Activated naive CD4-positive, alpha-beta T cell treated with anti-CD3 and anti-CD28 coated beads for 36 hours (primary cell): ENCODE measurements at regions of chr16 and their contacts with region 1.

Region 1: GRCh38 chr16:75519881-75520280 is 16.0 kb downstream of the CHST5 start:
- DNase-seq: no peak
- H3K4me3 Mint-ChIP-seq: no peak overlapping the region
- H3K27ac Mint-ChIP-seq: no peak overlapping the region
- H3K4me1 Mint-ChIP-seq: peaks cover 7% of the 10 kb centered on the region
- H3K27me3 Mint-ChIP-seq: no peaks in the 10 kb centered on the region

Region 2: DNA sequence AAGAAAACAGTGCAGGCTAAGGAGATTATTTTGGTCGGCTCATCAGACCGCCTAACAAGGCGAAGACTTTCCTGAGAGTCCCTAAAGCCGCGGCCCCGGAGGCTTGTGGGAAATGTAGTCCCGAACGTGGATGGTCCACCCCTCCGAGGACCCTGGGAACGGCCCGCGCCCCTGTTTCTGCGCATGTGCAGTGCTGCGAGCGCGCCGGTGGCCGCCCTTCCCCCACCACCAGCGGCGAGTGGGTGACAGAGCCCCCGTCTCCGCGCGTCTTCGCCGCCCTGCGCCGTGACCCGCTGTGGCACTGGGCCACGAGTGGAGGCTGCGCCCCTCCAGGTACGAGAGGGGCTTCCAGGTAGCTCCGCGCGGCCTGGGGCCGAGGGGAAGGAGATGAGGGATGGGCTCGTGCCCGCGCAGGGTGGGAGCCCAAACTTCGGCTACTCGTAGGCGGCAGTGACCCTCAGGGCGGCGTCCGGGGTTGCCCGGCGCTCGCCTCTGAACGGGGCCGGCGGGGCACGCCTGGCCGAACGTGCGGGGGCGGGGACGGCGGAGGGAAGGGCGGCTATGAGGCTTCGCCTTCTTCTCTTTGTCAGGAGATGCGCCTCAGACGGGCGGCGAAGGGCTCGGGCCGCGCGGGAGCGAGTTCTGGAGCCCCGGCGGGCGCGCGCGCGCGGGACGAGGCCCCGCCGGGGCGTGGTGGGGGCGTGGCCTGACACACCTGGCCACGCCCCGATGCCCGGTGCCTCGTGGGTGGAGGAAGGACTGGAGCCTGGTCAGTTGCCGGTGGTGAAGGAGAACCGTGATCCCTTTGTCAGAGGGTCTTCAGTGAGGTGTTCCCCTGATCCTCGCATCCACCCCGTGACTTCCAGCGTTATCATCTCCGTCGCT is 371.3 kb before region 1 on chr16 and contains the start of gene ZFP1:
- CTCF ChIA-PET with region 1: interaction called, 3 read pairs
- intact Hi-C with region 1: loop called (anchors 1 kb)
- DNase-seq: peak; percentile 97
- H3K4me3 Mint-ChIP-seq: peak within 1 kb of the TSS; percentile 80
- H3K27ac Mint-ChIP-seq: peak within 1 kb of the TSS; percentile 73
- H3K4me1 Mint-ChIP-seq: peaks cover 37% of the 10 kb centered on the region
- H3K27me3 Mint-ChIP-seq: no peaks in the 10 kb centered on the region
- total RNA-seq, gene ZFP1: 20.2 to 20.9 TPM

Region 3: DNA sequence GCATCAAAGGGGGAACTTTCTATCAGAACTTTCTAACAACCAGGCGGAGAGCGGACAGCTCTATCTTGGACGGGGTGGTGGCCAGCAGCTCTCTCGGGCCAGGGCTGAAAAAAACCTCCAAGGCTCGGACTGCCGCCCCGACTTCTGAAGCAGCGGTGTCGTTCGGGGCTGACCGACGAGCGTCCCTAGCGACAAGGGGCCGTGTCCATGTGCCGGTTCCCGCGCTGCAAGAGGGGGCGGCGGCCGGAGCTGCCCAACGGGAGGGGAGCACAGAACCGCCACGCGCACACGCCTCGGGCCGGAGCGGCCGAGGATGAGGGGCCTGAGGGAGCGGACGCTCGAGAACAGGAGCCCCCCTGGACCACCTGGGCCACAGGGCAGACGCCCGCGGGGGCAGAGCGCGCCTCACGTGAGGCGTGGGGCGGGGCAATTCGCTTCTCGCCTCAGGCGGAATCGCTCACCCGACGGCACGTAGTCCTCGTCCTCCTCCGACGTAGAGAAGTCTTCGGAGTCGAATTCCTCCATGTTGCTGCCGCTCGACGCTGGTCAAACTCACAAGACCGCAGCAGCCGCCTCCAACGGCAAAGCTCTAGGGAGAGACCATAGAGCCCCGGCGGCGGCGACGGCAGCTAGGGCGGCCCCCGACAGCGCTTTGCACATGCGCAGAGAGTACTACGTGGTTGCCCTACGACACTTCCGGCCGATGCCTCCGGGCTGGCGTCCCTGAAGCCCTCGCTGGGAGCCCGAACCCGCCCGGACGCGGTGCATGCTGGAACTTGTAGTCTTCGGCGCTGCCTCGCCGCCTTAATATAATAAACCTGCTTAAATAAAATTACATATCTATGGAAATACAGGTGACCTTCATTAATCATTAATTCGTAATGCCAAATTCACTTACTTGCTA is 86.8 kb before region 1 on chr16 and contains the start of gene CFDP1:
- CTCF ChIA-PET with region 1: interaction called, 3 read pairs
- intact Hi-C with region 1: loop called (anchors 1 kb)
- DNase-seq: peak; percentile 96
- H3K4me3 Mint-ChIP-seq: peak within 1 kb of the TSS; percentile 81
- H3K27ac Mint-ChIP-seq: peak within 1 kb of the TSS; percentile 93
- H3K4me1 Mint-ChIP-seq: peaks cover 30% of the 10 kb centered on the region
- H3K27me3 Mint-ChIP-seq: no peaks in the 10 kb centered on the region
- total RNA-seq, gene CFDP1: 37.2 to 44.1 TPM

Region 4: DNA sequence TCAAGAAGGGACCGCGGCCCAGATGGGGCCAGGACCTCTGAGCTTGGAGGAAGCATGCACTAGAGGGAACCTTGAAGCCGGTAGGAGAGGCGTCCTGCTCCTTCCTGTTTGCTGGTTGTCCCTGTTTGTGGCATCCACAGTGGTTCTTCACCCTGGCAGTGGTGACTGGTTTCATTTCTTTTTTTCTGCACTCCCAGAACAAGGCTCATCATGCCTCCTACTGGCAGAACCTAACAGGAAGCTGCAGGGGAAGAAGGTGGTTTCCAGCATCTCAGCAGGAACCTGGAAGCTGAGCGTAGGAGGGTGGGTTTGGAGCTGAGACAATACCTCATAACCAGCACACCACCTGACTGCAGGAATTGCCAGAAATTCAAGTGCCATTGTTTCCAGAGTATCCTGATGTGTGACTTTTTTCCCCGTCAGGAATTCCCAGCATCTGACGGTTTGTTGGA is 30.4 kb after region 1 on chr16:
- CTCF ChIA-PET with region 1: interaction called, 22 read pairs
- intact Hi-C with region 1: loop called (anchors 1 kb)
- DNase-seq: peak; percentile 69
- H3K4me3 Mint-ChIP-seq: no peak overlapping the region
- H3K27ac Mint-ChIP-seq: no peak overlapping the region
- H3K4me1 Mint-ChIP-seq: peaks cover 12% of the 10 kb centered on the region
- H3K27me3 Mint-ChIP-seq: peaks cover 4% of the 10 kb centered on the region

Region 5: GRCh38 chr16:75616521-75617010 is 96.7 kb after region 1 on chr16:
- CTCF ChIA-PET with region 1: no interaction called
- intact Hi-C with region 1: loop called (anchors 1 kb)
- DNase-seq: peak; percentile 24
- H3K4me3 Mint-ChIP-seq: no peak overlapping the region
- H3K27ac Mint-ChIP-seq: peak overlapping the region; percentile 6
- H3K4me1 Mint-ChIP-seq: peaks cover 33% of the 10 kb centered on the region
- H3K27me3 Mint-ChIP-seq: no peaks in the 10 kb centered on the region

Region 6: GRCh38 chr16:75764154-75764768 is 244.4 kb after region 1 on chr16:
- CTCF ChIA-PET with region 1: interaction called, 5 read pairs
- intact Hi-C with region 1: loop called (anchors 1 kb)
- DNase-seq: peak; percentile 77
- H3K4me3 Mint-ChIP-seq: no peak overlapping the region
- H3K27ac Mint-ChIP-seq: no peak overlapping the region
- H3K4me1 Mint-ChIP-seq: peaks cover 12% of the 10 kb centered on the region
- H3K27me3 Mint-ChIP-seq: peaks cover 3% of the 10 kb centered on the region